GM13976 (cell line): ENCODE measurements at regions of chr5 and their contacts with region 1.

Region 1: DNA sequence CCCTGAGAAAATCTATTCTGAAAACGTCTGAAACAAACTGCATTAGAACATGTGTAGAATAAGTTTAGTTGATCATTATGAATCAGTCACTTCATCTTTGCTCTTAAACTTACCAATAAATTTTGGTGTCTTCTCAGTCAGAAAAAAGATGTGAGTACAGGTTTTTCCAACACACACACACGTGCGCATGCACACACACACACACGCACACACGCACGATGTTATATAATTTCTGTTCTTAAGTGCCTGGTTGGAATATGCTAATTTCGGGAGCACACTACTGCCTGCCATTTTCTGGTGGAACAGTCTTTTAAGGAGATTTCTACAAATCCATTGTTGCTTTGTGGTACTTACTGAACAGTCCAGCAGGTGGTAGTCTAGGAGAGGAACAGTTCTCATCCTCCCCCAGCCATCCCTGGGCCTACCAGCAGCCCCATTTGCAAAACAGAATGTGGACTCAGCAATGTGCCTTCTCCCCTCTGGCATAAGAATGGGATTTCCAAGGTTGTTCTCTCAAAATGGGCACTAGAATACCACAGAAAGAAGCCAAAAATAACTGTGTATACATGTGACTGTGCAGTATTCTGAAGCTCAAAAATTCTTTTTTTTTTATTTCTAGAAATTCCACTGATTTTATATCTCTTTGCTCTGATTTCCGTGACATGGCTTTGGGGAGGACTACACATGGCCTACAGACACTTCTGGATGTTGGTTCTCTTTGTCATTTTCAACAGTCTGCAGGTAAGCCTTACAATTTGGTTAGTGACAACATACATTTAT is 281.3 kb downstream of the ARRDC3 start:
- DNase-seq: peak; percentile 45
- CTCF ChIP-seq: peak; percentile 62

Region 2: GRCh38 chr5:90096415-90097081 is 1005.2 kb before region 1 on chr5:
- in situ Hi-C with region 1: no loop called
- DNase-seq: no peak
- CTCF ChIP-seq: no peak

Region 3: GRCh38 chr5:90547072-90547536 is 554.7 kb before region 1 on chr5:
- in situ Hi-C with region 1: no loop called
- DNase-seq: no peak
- CTCF ChIP-seq: no peak

Region 4: GRCh38 chr5:91151947-91152346 is 50.2 kb after region 1 on chr5:
- in situ Hi-C with region 1: no loop called
- DNase-seq: no peak
- CTCF ChIP-seq: no peak

Region 5: DNA sequence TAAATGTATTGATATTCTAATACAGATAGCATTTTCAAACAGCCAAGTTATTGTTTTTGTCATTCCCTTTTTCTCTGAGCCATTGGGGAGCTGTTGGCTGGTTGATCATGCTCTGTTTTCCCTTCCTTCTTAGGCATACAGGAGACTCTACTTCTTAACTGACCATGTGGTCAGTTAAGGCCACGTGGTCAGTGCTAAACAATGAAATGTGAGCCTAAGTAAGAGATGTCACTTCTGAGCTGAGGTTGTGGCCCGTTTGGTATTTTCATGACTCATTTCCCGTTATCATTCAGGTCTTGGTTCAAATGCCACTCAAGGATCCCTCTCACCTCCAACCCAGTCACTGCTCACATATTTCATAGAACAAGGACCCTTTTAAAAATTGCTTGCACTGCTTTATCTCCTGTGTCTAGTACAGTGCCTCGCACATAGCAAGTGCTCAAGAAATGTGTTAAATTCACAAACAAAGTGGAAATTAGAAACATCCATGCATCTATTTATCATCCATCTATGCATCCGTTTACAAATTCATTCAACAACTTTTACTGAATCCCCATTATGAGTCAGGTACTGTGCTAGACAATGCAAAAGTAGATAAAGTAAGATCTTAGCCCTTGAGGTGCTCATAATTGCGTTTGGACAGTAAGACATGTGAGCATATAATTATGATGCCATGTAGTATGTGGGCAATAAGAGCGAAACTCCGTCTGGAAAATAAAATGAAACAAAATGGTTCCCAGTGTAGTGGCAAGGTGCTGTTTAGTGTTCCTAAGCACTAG is 230.7 kb after region 1 on chr5:
- in situ Hi-C with region 1: no loop called
- DNase-seq: no peak
- CTCF ChIP-seq: no peak

Region 6: DNA sequence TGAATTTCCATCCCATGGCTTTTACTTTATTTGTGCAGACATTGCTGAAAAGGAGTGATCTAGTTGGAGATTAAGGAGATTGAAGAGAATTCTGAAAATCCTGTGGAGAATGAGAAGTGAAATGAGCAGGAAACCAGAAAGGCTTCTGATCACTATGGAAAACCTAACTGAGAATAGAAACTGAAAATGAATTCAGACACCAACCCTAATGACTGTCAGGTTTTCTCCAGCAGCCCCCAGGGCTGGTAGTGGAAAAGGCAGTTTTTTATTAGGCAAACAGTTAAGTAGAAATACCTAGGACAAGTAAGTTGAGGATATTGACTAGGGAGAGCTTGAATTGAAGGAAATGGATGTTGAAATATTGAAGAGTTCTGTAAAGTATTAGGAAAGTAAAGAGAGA is 296.0 kb after region 1 on chr5:
- in situ Hi-C with region 1: loop called (anchors 10 kb)
- DNase-seq: no peak
- CTCF ChIP-seq: no peak